CD14-positive monocyte (primary cell): ENCODE measurements at regions of chr2 and their contacts with region 1.

Region 1: GRCh38 chr2:98649135-98649991 is 41.0 kb downstream of the UNC50 start:
- DNase-seq: peak; percentile 64 to 84 (median 70)
- H3K4me3 ChIP-seq: no peak overlapping the region
- H3K4me3 Mint-ChIP-seq: no peak overlapping the region
- H3K27ac ChIP-seq: no peak overlapping the region
- H3K27ac Mint-ChIP-seq: peak overlapping the region in 3 of 7 donors; percentile 8 to 50 (median 21)
- H3K4me1 ChIP-seq: no peaks in the 10 kb centered on the region
- H3K4me1 Mint-ChIP-seq: peaks cover 13% of the 10 kb centered on the region
- H3K27me3 ChIP-seq: no peaks in the 10 kb centered on the region
- H3K27me3 Mint-ChIP-seq: no peaks in the 10 kb centered on the region
- CTCF ChIP-seq: peak; percentile 96

Region 2: GRCh38 chr2:98835831-98836385 is 186.5 kb after region 1 on chr2:
- intact Hi-C with region 1: loop called (anchors 2 kb)
- DNase-seq: no peak
- H3K4me3 ChIP-seq: no peak overlapping the region
- H3K4me3 Mint-ChIP-seq: no peak overlapping the region
- H3K27ac ChIP-seq: no peak overlapping the region
- H3K27ac Mint-ChIP-seq: no peak overlapping the region
- H3K4me1 ChIP-seq: peaks cover 4 to 15% of the 10 kb centered on the region in 2 donors
- H3K4me1 Mint-ChIP-seq: peaks cover 19% of the 10 kb centered on the region
- H3K27me3 ChIP-seq: no peaks in the 10 kb centered on the region
- H3K27me3 Mint-ChIP-seq: peaks cover 0 to 4% (median 0%) of the 10 kb centered on the region in 3 donors
- CTCF ChIP-seq: no peak

Region 3: DNA sequence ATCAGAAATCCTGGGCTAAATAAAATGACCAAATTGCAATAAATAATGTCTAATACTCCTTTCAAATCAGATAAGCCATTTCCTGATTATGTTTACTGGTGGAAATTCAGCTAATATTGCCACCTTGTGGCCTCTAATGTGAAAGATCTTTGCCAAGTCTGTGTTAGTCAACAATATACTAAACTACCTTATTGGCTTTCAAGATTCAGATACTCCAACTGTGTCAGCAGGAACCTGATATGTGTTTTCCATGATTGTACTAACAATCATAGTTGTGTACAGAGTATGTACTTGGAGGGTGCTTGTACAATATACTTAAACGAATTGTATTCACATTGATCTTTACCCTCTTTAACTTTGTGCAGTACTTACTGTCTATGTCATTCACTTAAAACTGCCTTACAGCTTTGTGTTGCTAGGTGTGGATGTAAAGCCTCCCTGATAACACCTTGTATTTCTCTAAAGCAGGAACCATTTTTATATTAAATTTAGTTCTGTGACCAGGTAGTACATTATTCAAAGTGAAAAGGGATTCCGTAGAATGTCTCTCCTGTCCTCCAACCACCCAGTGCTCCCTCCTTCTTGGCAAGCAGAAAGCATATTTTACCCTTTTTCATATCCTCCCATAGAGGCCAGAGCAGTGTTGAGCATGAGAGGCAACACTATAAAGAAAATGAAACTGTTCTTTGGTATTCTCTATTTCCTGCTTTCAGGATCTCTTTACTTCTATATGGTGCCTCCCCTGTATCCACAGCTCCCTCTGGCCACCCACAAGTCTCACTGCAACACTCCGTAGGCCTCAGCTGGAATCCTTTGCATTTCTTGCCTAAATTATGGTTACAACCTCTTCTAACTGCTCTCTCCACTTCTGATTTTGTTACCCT is 417.0 kb after region 1 on chr2:
- intact Hi-C with region 1: loop called in 1 of 2 experiments (anchors 5 kb)
- DNase-seq: peak; percentile 17 to 55 (median 39)
- H3K4me3 ChIP-seq: peak overlapping the region in 2 of 3 experiments; percentile 26 to 39
- H3K4me3 Mint-ChIP-seq: no peak overlapping the region
- H3K27ac ChIP-seq: peak overlapping the region in 1 of 2 donors; percentile 64
- H3K27ac Mint-ChIP-seq: no peak overlapping the region
- H3K4me1 ChIP-seq: peaks cover 9 to 18% of the 10 kb centered on the region in 2 donors
- H3K4me1 Mint-ChIP-seq: peaks cover 6% of the 10 kb centered on the region
- H3K27me3 ChIP-seq: no peaks in the 10 kb centered on the region
- H3K27me3 Mint-ChIP-seq: no peaks in the 10 kb centered on the region
- CTCF ChIP-seq: peak; percentile 62